ENCODE measurements at regions of chr5 and their contacts with region 1.

Region 1: DNA sequence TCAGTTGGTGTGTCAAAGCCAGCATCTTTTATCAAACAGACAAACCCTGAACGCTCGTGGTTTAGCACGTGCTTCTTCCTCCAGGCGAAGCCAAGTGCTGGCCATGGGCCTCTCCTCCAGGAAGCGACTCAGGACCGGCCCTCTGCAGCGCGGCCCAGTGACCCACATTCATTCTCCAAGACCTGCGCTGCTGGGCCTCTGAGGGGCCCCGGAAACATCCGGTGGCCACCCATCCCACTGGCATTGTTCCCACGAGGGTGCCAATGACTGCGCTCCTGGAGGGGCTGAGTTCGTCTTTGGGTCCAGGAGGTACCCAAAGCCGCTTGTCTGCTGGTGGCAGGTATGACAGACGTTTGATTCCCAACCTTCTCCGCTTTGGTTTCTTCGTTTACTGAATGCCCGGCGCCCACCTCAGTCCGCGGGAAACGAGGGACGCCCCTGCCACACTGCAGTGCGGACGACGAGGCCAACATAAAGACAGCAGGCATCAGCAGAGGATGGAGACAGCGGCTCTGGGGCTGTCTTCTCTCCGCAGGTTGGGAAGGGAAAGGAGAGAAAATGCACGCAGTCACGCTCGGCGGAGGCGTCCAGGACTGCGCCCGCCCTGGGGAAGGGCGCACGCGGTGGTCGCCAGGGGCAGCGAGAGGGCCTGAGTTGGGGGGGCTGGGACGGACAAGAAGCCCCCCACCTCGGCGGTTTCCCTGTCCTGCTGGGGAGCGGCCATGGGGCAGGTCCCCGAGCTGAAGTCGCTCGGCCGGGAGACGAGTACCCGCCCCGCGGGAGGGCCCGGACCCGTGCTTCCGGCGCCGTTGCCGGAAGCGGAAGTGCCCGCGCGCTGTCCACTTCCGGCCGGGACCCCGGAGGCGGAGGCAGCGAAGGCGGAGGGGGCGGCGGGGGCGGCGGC is at the start of gene EXOC3:
- DNase-seq: peak; percentile 83
- ATAC-seq: peak; percentile 88
- H3K4me3 Mint-ChIP-seq: peak within 1 kb of the TSS; percentile 87
- H3K27ac Mint-ChIP-seq: peak within 1 kb of the TSS; percentile 92
- H3K4me1 Mint-ChIP-seq: peaks cover 37% of the 10 kb centered on the region
- H3K27me3 Mint-ChIP-seq: no peaks in the 10 kb centered on the region
- total RNA-seq, gene EXOC3: 49.7 to 62.7 TPM

Region 2: GRCh38 chr5:270340-270739 is 172.2 kb before region 1 on chr5:
- CTCF ChIA-PET with region 1: no interaction called
- POLR2A ChIA-PET with region 1: no interaction called
- intact Hi-C with region 1: loop called in 1 of 2 experiments (anchors 1 kb)
- DNase-seq: no peak
- ATAC-seq: no peak
- H3K4me3 Mint-ChIP-seq: peak overlapping the region; percentile 95
- H3K27ac Mint-ChIP-seq: peak overlapping the region; percentile 47
- H3K4me1 Mint-ChIP-seq: peaks cover 41% of the 10 kb centered on the region
- H3K27me3 Mint-ChIP-seq: no peaks in the 10 kb centered on the region

Region 3: DNA sequence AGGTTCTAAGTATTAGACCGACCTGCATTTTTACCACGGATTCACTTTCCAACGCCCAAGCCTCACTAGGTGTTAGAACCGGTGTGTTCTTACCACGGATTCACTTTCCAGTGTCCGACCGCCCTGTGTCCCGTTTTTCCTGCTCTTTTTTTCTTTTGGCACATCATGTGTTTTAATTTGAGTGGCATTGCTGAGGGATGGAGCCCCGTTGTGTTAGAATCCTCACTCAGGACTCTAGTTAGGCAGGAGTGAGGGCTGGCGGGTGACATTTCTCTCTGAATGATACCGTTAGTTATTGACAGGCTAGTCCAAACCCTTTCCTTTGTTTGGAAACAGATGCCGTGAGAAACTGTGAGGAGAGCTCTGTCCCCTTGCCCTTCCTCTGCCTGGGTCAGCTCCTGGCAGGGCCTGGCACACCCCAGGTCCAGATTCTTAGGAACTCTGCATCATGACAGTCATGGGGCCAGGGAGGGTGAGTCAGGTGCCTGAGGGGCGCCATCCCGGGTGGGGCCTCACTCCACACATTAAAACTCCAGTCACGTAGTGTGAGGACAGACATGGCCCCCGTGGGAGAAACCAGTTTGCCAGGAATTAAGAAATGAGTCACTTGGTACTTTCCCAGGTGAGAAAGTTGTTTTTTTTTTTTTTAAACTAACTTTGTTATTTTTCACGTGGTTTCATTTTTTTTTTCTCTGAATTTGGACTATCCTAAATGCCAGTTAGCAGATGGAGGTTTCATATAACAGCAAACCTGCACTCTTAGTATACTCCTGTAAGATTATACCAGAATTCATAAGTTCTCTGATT is 16.2 kb after region 1 on chr5:
- CTCF ChIA-PET with region 1: interaction called, 19 read pairs
- POLR2A ChIA-PET with region 1: interaction called, 4 read pairs
- intact Hi-C with region 1: loop called (anchors 1 to 2 kb)
- DNase-seq: peak; percentile 84
- ATAC-seq: peak; percentile 92
- H3K4me3 Mint-ChIP-seq: peak overlapping the region; percentile 40
- H3K27ac Mint-ChIP-seq: peak overlapping the region; percentile 97
- H3K4me1 Mint-ChIP-seq: peaks cover 72% of the 10 kb centered on the region
- H3K27me3 Mint-ChIP-seq: no peaks in the 10 kb centered on the region